ENCODE measurements at regions of chr12 and their contacts with region 1.

Region 1: DNA sequence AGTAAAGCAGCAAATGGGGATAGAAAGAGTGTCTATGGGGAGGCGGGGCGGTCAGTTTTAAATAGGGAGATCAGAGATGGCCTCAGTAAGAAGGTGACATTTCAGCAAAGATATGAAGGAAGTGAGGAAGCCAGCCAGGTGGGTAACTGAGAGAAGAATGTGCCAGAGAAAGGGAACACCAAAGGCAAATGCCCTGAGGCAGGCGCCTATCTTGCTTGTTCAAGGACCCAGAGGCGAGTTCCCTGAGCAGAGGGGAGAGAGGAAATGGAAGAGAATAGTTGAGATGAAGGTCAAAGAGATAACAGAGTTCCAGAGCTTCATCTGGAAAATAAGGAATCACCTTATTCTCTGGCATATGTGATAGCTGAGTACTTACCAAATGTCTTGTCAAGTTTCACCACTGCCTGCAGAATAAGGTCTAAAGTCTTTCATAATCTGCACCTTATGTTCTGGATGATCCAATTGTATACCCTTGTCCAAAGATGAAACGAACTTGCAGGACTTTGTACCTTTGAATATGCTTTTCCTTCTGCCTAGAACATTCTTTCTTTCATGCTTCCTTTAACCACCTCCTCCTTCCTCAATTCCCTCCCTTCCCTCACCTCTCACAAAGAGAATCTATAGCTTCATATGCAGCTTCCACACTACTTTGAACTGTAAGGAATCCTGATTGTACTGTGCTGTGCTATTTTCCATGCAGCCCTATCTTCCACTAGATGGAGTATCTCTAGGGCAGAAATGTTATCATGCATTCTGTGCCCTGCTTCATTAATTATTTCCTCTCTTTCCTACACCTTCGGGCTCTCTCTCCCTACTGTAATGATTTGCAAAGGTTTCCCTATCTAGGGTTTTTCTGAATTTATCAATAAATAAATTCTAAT is 38.5 kb downstream of the GNPTAB start:
- DNase-seq: no peak
- ATAC-seq: peak; percentile 38; the same call in 1 of the 3 replicates
- H3K4me3 ChIP-seq: no peak overlapping the region
- H3K27ac ChIP-seq: no peak overlapping the region
- H3K4me1 ChIP-seq: peaks cover 10% of the 10 kb centered on the region
- H3K27me3 ChIP-seq: no peaks in the 10 kb centered on the region
- CTCF ChIP-seq: peak; percentile 15 to 36 (median 19); a peak in 4 of 6 replicates
- EP300 ChIP-seq: no peak
- POLR2A ChIP-seq: no peak
- RAD21 ChIP-seq: peak; percentile 17; the same call in 1 of the 2 replicates

Region 2: DNA sequence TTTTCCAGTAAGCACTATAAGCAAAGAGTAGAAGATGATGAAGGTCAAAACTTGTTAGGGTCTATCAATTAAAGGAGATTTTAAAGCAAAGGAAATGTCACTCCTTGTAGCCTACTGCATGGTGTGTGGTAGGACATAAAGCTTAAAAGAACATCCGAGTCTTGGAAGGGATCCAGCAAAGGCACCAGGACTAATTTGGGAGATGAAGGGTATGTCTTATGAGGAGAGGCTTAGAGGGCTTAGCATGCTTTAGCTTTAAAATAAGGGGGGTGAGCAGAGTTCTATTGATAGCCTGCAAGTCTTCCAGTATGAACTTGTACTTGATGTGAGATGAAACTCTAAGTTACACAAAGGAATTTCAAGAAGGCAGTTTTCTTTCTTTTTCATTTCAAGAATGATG is 209.4 kb before region 1 on chr12:
- CTCF ChIA-PET with region 1: no interaction called
- POLR2A ChIA-PET with region 1: no interaction called
- RAD21 ChIA-PET with region 1: no interaction called
- SMC1A ChIA-PET with region 1: no interaction called
- in situ Hi-C with region 1: no loop called
- intact Hi-C with region 1: no loop called
- DNase-seq: no peak
- ATAC-seq: no peak
- H3K4me3 ChIP-seq: no peak overlapping the region
- H3K27ac ChIP-seq: no peak overlapping the region
- H3K4me1 ChIP-seq: no peaks in the 10 kb centered on the region
- H3K27me3 ChIP-seq: peaks cover 0 to 2% of the 10 kb centered on the region in 2 experiments; a peak in 1 of 4 replicates
- CTCF ChIP-seq: no peak
- EP300 ChIP-seq: no peak
- POLR2A ChIP-seq: no peak
- RAD21 ChIP-seq: no peak

Region 3: DNA sequence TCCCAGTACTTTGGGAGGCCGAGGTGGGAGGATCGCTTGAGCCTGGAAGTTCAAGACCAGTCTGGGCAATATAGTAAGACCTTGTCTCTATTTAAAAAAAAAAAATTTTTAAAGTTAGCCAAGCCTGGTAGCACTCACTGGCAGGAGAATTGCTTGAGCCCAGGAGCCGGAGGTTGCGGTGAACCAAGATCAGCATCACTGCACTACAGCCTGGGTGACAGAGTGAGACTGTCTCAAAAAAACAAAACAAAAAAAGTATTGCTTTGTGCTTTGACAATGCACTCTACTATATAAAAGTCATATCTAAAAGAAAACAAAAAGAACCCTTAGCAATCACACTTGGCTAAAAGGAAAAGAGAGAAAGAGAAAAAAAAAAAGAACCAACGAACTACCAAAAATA is 11.7 kb after region 1 on chr12:
- CTCF ChIA-PET with region 1: interaction called, 12 read pairs
- POLR2A ChIA-PET with region 1: interaction called, 3 read pairs
- RAD21 ChIA-PET with region 1: no interaction called
- SMC1A ChIA-PET with region 1: interaction called, 11 read pairs
- in situ Hi-C with region 1: no loop called
- intact Hi-C with region 1: no loop called
- DNase-seq: no peak
- ATAC-seq: no peak
- H3K4me3 ChIP-seq: no peak overlapping the region
- H3K27ac ChIP-seq: no peak overlapping the region
- H3K4me1 ChIP-seq: no peaks in the 10 kb centered on the region
- H3K27me3 ChIP-seq: no peaks in the 10 kb centered on the region
- CTCF ChIP-seq: no peak
- EP300 ChIP-seq: no peak
- POLR2A ChIP-seq: no peak
- RAD21 ChIP-seq: no peak